ENCODE measurements at regions of chr2 and their contacts with region 1.

Region 1: DNA sequence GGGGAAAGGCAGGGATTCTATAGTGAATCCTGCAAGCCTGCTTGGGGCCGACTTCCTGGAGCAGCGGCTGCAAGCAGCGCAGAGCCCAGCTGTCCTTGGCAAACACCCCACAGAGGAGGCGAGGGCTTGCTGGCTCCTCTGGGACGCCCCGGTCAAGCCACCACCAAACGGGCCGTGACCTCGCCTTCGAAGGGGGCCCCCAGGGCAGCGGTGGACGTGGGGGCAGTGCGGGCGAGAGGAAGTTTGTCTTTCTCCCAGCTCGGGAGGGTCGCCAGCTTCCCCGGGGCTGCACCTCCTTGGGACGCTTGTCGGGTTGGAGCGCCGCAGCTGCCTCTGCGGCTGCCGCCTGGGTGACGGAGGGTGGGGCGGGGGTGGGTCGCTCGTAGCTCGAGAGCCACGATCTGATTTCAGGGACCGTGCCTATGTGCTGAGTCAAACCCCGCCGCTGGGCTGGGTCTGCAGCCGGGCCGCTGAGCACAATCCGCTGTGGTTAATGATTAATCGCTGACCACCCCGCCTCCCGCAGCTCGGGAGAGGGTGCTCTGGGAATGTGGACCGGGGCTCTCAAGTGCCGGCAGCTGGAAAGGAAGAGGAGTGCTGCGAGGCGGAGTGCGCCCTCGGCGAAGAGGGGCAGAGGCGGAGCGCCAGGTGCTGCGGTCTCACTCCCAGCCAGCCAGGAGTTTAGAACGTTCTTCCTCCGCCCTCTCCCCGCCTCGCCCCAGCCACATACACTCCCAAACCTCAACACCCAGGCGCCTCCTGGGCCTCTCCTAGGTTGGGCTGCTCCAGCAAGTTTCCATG is at the start of gene GPR39:
- DNase-seq: peak; percentile 97
- H3K4me3 ChIP-seq: peak within 1 kb of the TSS; percentile 73
- H3K27ac ChIP-seq: peak within 1 kb of the TSS; percentile 95
- H3K4me1 ChIP-seq: peaks cover 49% of the 10 kb centered on the region
- H3K27me3 ChIP-seq: no peaks in the 10 kb centered on the region
- CTCF ChIP-seq: no peak
- total RNA-seq, gene GPR39: 14.1 and 20.9 TPM in 2 replicates

Region 2: GRCh38 chr2:132267105-132267497 is 149.2 kb before region 1 on chr2:
- CTCF ChIA-PET with region 1: no interaction called
- POLR2A ChIA-PET with region 1: no interaction called
- intact Hi-C with region 1: loop called (anchors 10 kb)
- DNase-seq: no peak
- H3K4me3 ChIP-seq: no peak overlapping the region
- H3K27ac ChIP-seq: no peak overlapping the region
- H3K4me1 ChIP-seq: peaks cover 7% of the 10 kb centered on the region; the same call in 1 of the 2 replicates
- H3K27me3 ChIP-seq: peaks cover 4% of the 10 kb centered on the region; the same call in 1 of the 2 replicates
- CTCF ChIP-seq: no peak

Region 3: GRCh38 chr2:132430900-132431294 is 14.6 kb after region 1 on chr2:
- CTCF ChIA-PET with region 1: no interaction called
- POLR2A ChIA-PET with region 1: no interaction called
- intact Hi-C with region 1: loop called (anchors 1 kb)
- DNase-seq: peak; percentile 75 to 96
- H3K4me3 ChIP-seq: peak overlapping the region; percentile 46
- H3K27ac ChIP-seq: peak overlapping the region; percentile 100
- H3K4me1 ChIP-seq: peaks cover 67% of the 10 kb centered on the region
- H3K27me3 ChIP-seq: no peaks in the 10 kb centered on the region
- CTCF ChIP-seq: no peak

Region 4: DNA sequence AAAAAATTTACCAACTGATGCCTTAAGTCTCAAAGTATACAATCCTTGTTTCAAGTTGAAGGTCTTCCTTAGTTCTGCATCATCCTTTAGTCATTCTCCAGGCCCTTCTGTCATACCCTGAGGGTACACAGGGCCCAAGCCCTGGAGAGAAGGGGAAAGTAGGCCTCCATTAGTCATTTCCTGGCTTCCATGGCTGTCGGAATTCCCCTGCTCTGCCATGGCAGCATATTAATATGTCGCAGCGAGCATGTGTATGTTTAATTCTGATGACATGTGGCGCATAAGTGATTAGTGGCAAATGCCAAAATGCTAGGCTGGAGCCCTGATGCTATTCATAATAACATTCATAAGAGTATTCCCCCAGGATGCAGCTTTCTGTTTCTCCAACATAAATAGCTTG is 22.4 kb after region 1 on chr2:
- CTCF ChIA-PET with region 1: no interaction called
- POLR2A ChIA-PET with region 1: interaction called, 3 read pairs
- intact Hi-C with region 1: loop called (anchors 1 kb)
- DNase-seq: peak; percentile 78 to 98
- H3K4me3 ChIP-seq: peak overlapping the region; percentile 37; the same call in 1 of the 2 replicates
- H3K27ac ChIP-seq: peak overlapping the region; percentile 97
- H3K4me1 ChIP-seq: peaks cover 63% of the 10 kb centered on the region
- H3K27me3 ChIP-seq: no peaks in the 10 kb centered on the region
- CTCF ChIP-seq: no peak

Region 5: DNA sequence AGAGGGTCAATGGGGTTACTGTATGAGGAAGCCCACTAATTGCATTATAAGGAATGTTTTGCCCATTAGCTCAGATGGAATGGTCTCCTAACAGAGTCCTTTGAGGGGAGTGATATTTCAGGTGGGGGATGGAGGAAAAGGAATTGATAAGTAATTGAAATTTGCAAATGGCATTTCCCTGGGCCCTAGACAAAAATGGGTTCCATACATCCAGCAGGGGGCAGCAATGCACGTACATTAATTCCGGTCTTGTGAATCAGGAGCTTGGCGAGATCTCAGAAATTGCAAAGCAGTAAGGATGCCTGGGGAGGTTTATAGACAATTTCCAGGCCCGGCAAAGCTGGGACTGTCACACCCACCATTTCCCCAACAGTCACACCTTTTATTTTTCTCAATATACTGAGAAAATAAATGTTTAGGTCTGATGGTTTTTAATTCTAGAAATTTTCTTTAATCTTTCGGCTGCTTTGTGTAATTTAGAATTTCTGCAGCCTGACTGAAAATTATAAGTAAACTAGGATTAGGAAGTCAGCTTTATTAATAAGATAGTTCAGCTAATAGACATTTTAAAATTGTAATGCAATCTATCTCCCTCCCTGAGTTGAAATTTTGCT is 130.9 kb after region 1 on chr2:
- CTCF ChIA-PET with region 1: interaction called, 4 read pairs
- POLR2A ChIA-PET with region 1: no interaction called
- intact Hi-C with region 1: loop called (anchors 5 kb)
- DNase-seq: peak in 1 of 2 experiments; percentile 41
- H3K4me3 ChIP-seq: no peak overlapping the region
- H3K27ac ChIP-seq: no peak overlapping the region
- H3K4me1 ChIP-seq: peaks cover 21% of the 10 kb centered on the region
- H3K27me3 ChIP-seq: no peaks in the 10 kb centered on the region
- CTCF ChIP-seq: peak; percentile 74

Region 6: DNA sequence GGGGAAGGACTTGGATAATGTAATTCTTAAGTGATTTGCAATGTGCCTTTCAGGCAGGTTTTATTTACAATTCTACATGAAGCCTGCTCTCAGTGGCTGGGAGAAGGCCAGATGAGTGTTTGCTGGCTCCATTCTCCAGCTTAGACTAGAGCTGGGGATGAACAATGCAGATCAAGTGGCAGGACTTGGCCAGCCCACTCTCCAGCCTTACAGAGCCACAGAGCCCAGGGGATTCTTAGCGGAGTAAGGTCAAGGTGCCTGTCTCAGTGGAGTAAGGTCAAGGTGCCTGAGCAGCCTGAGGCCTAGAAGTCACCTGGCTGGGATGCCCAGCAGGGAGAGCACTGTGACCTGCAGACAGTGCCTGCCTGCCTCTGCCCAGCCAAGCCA is 166.1 kb after region 1 on chr2:
- CTCF ChIA-PET with region 1: no interaction called
- POLR2A ChIA-PET with region 1: no interaction called
- intact Hi-C with region 1: no loop called
- DNase-seq: no peak
- H3K4me3 ChIP-seq: no peak overlapping the region
- H3K27ac ChIP-seq: no peak overlapping the region
- H3K4me1 ChIP-seq: no peaks in the 10 kb centered on the region
- H3K27me3 ChIP-seq: no peaks in the 10 kb centered on the region
- CTCF ChIP-seq: no peak

Region 7: GRCh38 chr2:132670496-132671150 is 254.3 kb after region 1 on chr2:
- CTCF ChIA-PET with region 1: no interaction called
- POLR2A ChIA-PET with region 1: no interaction called
- intact Hi-C with region 1: loop called (anchors 5 kb)
- DNase-seq: peak; percentile 40 to 64
- H3K4me3 ChIP-seq: peak overlapping the region; percentile 75
- H3K27ac ChIP-seq: 0 out of 2 replicates have a peak overlapping the region, but pooled peaks have one; percentile 6
- H3K4me1 ChIP-seq: peaks cover 12% of the 10 kb centered on the region
- H3K27me3 ChIP-seq: no peaks in the 10 kb centered on the region
- CTCF ChIP-seq: no peak

Measured in PC-9 (cell line).